ENCODE measurements at regions of chr1 and their contacts with region 1.

Region 1: DNA sequence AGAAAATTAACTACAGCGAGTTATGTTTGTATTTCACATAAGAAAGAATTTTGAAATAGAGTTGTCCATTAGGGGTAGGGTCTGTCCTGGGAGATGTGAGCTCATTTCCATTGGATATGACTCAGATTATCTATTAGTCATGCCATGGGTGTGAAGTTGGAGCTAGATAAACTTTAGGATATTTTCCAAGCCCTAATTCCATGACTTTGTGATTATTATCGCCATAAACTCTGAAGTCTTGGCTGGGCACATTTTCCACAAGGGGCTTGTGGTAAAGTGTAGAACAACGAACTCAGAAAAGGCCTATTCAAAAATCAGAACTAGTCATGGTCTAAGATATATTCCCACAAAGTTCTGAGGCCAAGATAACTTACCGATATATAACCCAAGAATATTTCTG is 396.6 kb downstream of the DPYD start:
- DNase-seq: no peak
- H3K4me3 ChIP-seq: no peak overlapping the region
- H3K27ac ChIP-seq: no peak overlapping the region
- H3K4me1 ChIP-seq: no peaks in the 10 kb centered on the region
- H3K27me3 ChIP-seq: no peaks in the 10 kb centered on the region
- CTCF ChIP-seq: no peak
- POLR2A ChIP-seq: no peak

Region 2: GRCh38 chr1:97137862-97138514 is 386.2 kb before region 1 on chr1:
- CTCF ChIA-PET with region 1: interaction called, 14 read pairs
- POLR2A ChIA-PET with region 1: no interaction called
- dilution Hi-C with region 1: no loop called
- intact Hi-C with region 1: loop called (anchors 10 kb)
- DNase-seq: peak; percentile 95
- H3K4me3 ChIP-seq: no peak overlapping the region
- H3K27ac ChIP-seq: peak overlapping the region; percentile 27
- H3K4me1 ChIP-seq: peaks cover 10% of the 10 kb centered on the region
- H3K27me3 ChIP-seq: no peaks in the 10 kb centered on the region
- CTCF ChIP-seq: peak; percentile 52 to 65
- POLR2A ChIP-seq: no peak

Region 3: DNA sequence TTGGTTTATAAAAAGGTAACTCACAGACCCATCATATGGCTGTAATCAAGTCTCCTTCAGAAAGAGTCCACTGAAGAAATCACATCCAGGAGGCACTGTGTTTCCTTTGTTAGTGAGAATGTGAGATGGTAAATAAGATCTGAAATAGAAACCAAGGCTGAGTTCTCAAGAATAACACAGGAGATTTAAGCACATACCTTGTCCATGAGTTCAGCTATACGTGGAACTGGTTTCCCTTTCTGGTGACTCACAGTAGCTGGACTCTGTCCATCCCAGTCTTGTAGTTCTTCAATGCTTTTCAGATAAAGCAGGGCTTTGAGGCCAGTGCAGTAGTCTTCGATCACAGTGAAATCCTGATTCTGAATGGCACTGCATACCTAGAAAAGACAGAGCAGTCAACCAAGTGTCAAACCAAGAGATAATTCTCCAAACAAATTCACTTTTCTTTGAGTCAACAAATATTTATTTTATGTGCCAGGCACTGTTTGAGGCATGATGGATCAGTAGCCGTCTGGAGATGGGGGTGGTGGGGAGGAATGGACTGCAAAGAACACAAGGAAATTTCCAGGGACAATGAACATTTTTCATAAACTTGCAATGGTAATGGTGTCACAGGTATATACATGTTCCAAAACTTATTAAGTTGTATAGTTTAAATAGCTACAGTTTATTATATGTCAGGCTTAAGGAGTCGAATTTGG is 331.2 kb before region 1 on chr1:
- CTCF ChIA-PET with region 1: no interaction called
- POLR2A ChIA-PET with region 1: no interaction called
- dilution Hi-C with region 1: no loop called
- intact Hi-C with region 1: loop called (anchors 2 kb)
- DNase-seq: peak; percentile 97
- H3K4me3 ChIP-seq: peak overlapping the region in 1 of 3 experiments; percentile 15
- H3K27ac ChIP-seq: peak overlapping the region; percentile 73
- H3K4me1 ChIP-seq: peaks cover 15% of the 10 kb centered on the region
- H3K27me3 ChIP-seq: no peaks in the 10 kb centered on the region
- CTCF ChIP-seq: no peak
- POLR2A ChIP-seq: no peak

Region 4: DNA sequence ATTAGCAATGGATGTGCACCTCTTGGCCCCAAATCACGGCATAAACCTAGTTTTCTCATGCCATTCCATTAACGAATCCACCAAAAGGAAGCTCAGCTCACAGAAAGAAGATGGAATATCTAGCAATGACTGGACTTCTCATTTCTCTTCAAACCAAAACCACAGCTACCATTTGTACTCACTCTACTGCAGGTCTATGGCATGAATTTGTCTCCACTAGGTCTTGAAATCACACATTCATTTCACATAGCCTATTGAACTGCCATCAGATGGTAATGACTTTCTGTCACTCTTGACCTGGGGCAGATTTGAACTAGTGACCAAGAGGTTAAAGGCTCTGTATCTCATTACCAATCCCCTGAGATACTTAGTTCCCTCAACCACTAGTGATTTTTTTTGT is 13.9 kb after region 1 on chr1:
- CTCF ChIA-PET with region 1: interaction called, 11 read pairs
- POLR2A ChIA-PET with region 1: no interaction called
- dilution Hi-C with region 1: no loop called
- intact Hi-C with region 1: no loop called
- DNase-seq: no peak
- H3K4me3 ChIP-seq: no peak overlapping the region
- H3K27ac ChIP-seq: no peak overlapping the region
- H3K4me1 ChIP-seq: peaks cover 9% of the 10 kb centered on the region
- H3K27me3 ChIP-seq: no peaks in the 10 kb centered on the region
- CTCF ChIP-seq: no peak
- POLR2A ChIP-seq: no peak